ENCODE measurements at regions of chr5 and their contacts with region 1.

Region 1: GRCh38 chr5:90434116-90434714 is 24.7 kb upstream of the CETN3 start:
- DNase-seq: peak; percentile 76
- ATAC-seq: peak; percentile 97
- H3K4me3 ChIP-seq: no peak overlapping the region
- H3K27ac ChIP-seq: no peak overlapping the region
- H3K4me1 ChIP-seq: no peaks in the 10 kb centered on the region
- H3K27me3 ChIP-seq: no peaks in the 10 kb centered on the region
- CTCF ChIP-seq: peak; percentile 96

Region 2: GRCh38 chr5:90289837-90290236 is 144.4 kb before region 1 on chr5:
- CTCF ChIA-PET with region 1: interaction called, 3 read pairs
- POLR2A ChIA-PET with region 1: no interaction called
- intact Hi-C with region 1: loop called (anchors 5 kb)
- DNase-seq: no peak
- ATAC-seq: no peak
- H3K4me3 ChIP-seq: no peak overlapping the region
- H3K27ac ChIP-seq: no peak overlapping the region
- H3K4me1 ChIP-seq: peaks cover 7% of the 10 kb centered on the region; the same call in 1 of the 2 replicates
- H3K27me3 ChIP-seq: no peaks in the 10 kb centered on the region
- CTCF ChIP-seq: no peak

Region 3: DNA sequence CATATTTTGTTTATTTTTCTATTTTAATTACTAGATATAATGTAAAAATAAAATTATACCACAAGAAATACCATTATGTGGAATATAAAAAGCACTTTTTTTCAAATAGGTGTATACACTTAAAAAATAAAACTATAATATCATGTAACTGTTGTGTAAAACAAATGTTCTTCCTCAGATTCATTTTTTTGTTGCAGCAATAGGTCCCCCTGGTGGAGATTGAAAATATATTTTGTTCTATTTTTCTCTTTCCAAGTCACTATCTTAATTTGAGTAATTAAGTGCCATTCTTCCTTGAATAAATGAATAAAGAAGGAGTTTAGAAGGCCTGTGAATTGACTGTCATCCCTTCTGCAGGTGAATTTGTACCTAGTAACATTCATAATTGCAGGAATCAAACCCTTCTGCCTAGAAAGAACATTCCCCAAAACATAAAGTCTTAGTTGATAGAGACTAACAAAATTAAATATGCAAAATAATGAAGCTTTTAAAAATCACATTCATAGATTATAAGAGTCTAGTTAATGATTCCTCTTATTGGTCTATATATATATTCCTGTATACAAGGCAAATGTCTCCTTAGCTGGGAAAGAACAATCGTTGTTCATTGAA is 48.0 kb before region 1 on chr5:
- CTCF ChIA-PET with region 1: no interaction called
- POLR2A ChIA-PET with region 1: no interaction called
- intact Hi-C with region 1: loop called (anchors 1 kb)
- DNase-seq: peak; percentile 70
- ATAC-seq: no peak; the same call in 1 of the 2 replicates
- H3K4me3 ChIP-seq: no peak overlapping the region
- H3K27ac ChIP-seq: no peak overlapping the region
- H3K4me1 ChIP-seq: peaks cover 9% of the 10 kb centered on the region
- H3K27me3 ChIP-seq: no peaks in the 10 kb centered on the region
- CTCF ChIP-seq: peak; percentile 72

Region 4: DNA sequence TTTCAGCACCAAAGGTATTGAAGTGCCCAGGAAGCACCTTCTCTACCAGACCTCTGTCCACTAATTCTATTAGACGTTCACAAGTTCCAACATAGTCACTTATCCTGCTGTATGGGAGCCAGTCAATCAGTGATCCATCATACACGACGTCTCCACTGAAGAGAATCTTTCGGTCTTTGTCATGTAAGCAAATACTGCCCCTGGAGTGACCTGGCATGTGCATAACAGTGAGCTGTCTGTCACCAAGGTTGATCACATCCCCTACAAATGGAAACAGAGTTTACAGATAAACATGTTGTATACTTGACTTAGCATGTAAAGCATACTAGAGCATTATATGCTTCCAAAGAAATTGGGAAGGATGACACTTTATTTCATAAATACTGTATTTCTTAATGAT is 27.1 kb after region 1 on chr5:
- CTCF ChIA-PET with region 1: no interaction called
- POLR2A ChIA-PET with region 1: interaction called, 16 read pairs
- intact Hi-C with region 1: no loop called
- DNase-seq: no peak
- ATAC-seq: no peak
- H3K4me3 ChIP-seq: no peak overlapping the region
- H3K27ac ChIP-seq: no peak overlapping the region
- H3K4me1 ChIP-seq: no peaks in the 10 kb centered on the region
- H3K27me3 ChIP-seq: no peaks in the 10 kb centered on the region
- CTCF ChIP-seq: no peak

Region 5: GRCh38 chr5:90529194-90529938 is 95.2 kb after region 1 on chr5 and contains the start of gene LYSMD3:
- CTCF ChIA-PET with region 1: interaction called, 5 read pairs
- POLR2A ChIA-PET with region 1: interaction called, 3 read pairs
- intact Hi-C with region 1: loop called (anchors 1 kb)
- DNase-seq: peak; percentile 99
- ATAC-seq: peak; percentile 90
- H3K4me3 ChIP-seq: peak within 1 kb of the TSS; percentile 85
- H3K27ac ChIP-seq: peak within 1 kb of the TSS; percentile 65
- H3K4me1 ChIP-seq: peaks cover 35% of the 10 kb centered on the region
- H3K27me3 ChIP-seq: no peaks in the 10 kb centered on the region
- CTCF ChIP-seq: no peak
- total RNA-seq, gene LYSMD3: 7.9 and 10.0 TPM in 2 replicates

Region 6: DNA sequence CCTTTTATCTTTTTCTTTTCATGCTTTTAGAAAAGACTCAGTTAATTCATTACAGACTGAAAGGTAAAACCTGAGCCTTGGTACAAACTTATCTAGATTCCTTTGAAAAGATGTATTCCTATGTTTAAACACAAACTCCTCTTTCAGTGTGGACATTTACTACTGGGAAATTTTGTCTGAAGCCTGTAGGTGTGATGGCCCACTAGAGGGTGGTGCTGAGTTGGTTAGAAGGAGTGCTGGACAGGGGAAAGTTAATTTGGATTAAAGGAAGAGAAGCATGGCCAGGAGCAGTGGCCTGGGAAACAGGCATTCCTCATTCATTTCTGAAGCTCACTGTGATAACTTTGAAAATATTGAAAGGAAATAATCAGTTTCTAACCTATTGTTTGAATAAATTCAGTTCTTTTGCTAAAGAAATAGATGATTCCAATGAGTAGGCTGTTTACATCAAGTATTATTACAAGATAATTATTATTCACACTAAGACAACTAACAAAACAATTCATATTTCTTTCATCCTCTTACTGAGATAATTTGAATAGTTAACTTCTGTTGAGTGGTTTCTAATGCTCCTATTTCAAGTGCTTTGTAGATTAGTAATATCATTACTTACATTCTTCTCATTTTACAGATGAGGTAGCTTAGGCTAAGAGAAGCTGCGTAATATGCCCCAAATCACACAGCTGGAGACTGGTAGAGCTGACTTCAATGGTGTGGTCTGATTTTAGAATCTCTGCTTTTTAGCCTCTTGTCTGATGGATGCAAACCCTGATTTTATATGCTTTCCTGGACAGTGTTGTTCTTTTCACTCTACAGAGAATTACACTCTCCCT is 275.3 kb after region 1 on chr5:
- CTCF ChIA-PET with region 1: no interaction called
- POLR2A ChIA-PET with region 1: no interaction called
- intact Hi-C with region 1: loop called (anchors 1 kb)
- DNase-seq: peak; percentile 77
- ATAC-seq: peak; percentile 99
- H3K4me3 ChIP-seq: no peak overlapping the region
- H3K27ac ChIP-seq: no peak overlapping the region
- H3K4me1 ChIP-seq: no peaks in the 10 kb centered on the region
- H3K27me3 ChIP-seq: no peaks in the 10 kb centered on the region
- CTCF ChIP-seq: peak; percentile 97

Region 7: GRCh38 chr5:91777671-91778070 is 1343.5 kb after region 1 on chr5:
- CTCF ChIA-PET with region 1: no interaction called
- POLR2A ChIA-PET with region 1: no interaction called
- intact Hi-C with region 1: no loop called
- DNase-seq: no peak
- ATAC-seq: no peak
- H3K4me3 ChIP-seq: no peak overlapping the region
- H3K27ac ChIP-seq: no peak overlapping the region
- H3K4me1 ChIP-seq: no peaks in the 10 kb centered on the region
- H3K27me3 ChIP-seq: peaks cover 10% of the 10 kb centered on the region; the same call in 1 of the 2 replicates
- CTCF ChIP-seq: no peak

Measured in PC-3 (cell line).